ENCODE measurements at regions of chr2 and their contacts with region 1.

Region 1: GRCh38 chr2:178718283-178718682 is 88.9 kb downstream of the TTN start:
- DNase-seq: no peak
- ATAC-seq: no peak
- H3K4me3 ChIP-seq: no peak overlapping the region
- H3K4me3 Mint-ChIP-seq: no peak overlapping the region
- H3K27ac ChIP-seq: no peak overlapping the region
- H3K27ac Mint-ChIP-seq: no peak overlapping the region
- H3K4me1 ChIP-seq: no peaks in the 10 kb centered on the region
- H3K4me1 Mint-ChIP-seq: no peaks in the 10 kb centered on the region
- H3K27me3 ChIP-seq: no peaks in the 10 kb centered on the region
- H3K27me3 Mint-ChIP-seq: no peaks in the 10 kb centered on the region
- CTCF ChIP-seq: no peak

Region 2: DNA sequence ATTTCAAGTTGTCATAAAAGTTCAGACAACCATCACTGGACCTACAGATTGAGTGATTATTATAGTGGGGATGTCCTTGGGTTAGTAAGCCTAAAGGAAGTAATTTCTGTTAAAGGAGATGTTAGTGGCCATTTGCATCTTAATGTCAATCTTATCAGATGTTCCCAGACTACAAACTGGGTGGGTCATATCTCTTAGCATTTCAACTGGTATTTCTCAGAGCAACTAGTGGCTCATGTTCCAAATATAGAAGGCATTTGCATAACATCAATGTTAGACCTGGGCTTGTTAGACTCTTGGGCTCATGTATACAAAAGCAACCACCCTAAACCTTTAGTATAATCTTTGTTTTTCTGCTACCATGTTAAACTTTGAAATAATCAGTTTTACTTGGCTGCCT is 220.1 kb before region 1 on chr2:
- CTCF ChIA-PET with region 1: no interaction called
- POLR2A ChIA-PET with region 1: no interaction called
- intact Hi-C with region 1: no loop called
- DNase-seq: no peak
- ATAC-seq: no peak
- H3K4me3 ChIP-seq: no peak overlapping the region
- H3K4me3 Mint-ChIP-seq: no peak overlapping the region
- H3K27ac ChIP-seq: no peak overlapping the region
- H3K27ac Mint-ChIP-seq: no peak overlapping the region
- H3K4me1 ChIP-seq: no peaks in the 10 kb centered on the region
- H3K4me1 Mint-ChIP-seq: no peaks in the 10 kb centered on the region
- H3K27me3 ChIP-seq: no peaks in the 10 kb centered on the region
- H3K27me3 Mint-ChIP-seq: no peaks in the 10 kb centered on the region
- CTCF ChIP-seq: no peak

Region 3: DNA sequence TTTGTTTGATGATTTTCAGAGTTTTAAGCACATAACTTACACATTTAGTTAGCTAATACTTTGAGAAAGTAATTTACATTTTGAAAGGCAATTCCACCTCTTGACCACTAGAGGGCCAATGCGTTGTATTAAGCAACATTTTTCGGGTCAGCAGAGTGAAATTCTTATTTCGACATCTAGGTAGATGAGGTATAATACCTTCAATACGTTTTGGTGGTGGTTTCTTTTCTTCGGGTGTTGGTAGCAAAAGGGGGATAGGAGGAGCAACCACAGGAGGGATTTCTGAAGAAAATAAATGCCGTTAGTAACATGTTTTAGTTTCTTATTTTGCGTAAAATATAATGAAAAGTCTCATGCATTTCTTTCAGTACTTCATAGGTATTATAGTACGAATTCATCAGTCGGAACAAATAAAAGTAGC is 17.4 kb before region 1 on chr2:
- CTCF ChIA-PET with region 1: interaction called, 12 read pairs
- POLR2A ChIA-PET with region 1: no interaction called
- intact Hi-C with region 1: no loop called
- DNase-seq: peak in 2 of 9 experiments; percentile 16 to 47
- ATAC-seq: no peak
- H3K4me3 ChIP-seq: no peak overlapping the region
- H3K4me3 Mint-ChIP-seq: no peak overlapping the region
- H3K27ac ChIP-seq: no peak overlapping the region
- H3K27ac Mint-ChIP-seq: no peak overlapping the region
- H3K4me1 ChIP-seq: no peaks in the 10 kb centered on the region
- H3K4me1 Mint-ChIP-seq: peaks cover 2% of the 10 kb centered on the region
- H3K27me3 ChIP-seq: no peaks in the 10 kb centered on the region
- H3K27me3 Mint-ChIP-seq: no peaks in the 10 kb centered on the region
- CTCF ChIP-seq: peak; percentile 97

Measured in CD8-positive, alpha-beta T cell (primary cell).